Activated CD4-positive, alpha-beta memory T cell treated with anti-CD3 and anti-CD28 coated beads for 36 hours (primary cell): ENCODE measurements at regions of chr22 and their contacts with region 1.

Region 1: DNA sequence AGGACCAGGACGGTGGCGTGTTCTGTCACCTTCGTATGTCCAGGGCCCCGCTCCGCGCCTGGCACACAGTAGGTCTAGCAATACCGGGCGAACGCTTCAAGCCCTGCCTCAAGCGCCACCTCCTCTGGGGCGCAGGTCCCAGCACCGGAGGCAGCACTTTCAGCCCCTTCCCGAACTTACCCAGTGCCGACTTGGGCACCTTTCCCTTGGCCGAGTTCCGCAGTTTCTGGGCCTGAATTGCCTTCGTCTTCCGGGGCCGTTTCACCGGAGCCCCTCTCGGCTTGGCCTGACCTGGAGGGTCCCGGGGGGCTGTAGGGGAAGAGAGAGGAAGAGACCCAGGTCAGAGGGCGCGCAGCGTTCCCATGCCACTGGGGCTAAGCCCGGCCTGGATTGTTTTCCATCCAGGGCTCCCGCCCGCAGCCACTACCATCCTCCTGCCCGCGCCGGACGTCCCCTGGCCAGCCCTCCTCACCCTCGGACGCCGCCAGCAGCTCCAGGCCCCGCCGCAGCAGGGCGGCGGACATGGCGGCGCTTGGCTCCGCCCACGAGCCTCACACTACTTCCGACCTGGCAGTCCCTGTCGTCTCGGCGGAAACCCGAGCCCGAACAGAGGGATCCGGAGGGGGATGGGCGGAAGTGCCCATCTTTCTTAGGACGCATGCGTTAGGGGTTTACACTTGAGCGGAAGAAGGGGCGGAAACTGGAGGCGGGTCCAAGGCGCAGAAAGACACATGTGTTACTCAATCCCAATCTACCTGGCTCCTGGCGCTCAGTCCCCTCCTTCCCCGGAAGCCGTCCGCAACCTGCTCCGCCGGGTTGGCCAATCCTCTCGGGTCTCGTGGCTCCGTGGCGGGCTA is at the start of gene RPS19BP1:
- DNase-seq: peak; percentile 100
- H3K4me3 Mint-ChIP-seq: peak within 1 kb of the TSS; percentile 91
- H3K27ac Mint-ChIP-seq: peak within 1 kb of the TSS; percentile 80
- H3K4me1 Mint-ChIP-seq: peaks cover 58% of the 10 kb centered on the region
- H3K27me3 Mint-ChIP-seq: no peaks in the 10 kb centered on the region
- total RNA-seq, gene RPS19BP1: 65.2 to 67.5 TPM

Region 2: GRCh38 chr22:39170825-39171622 is 361.4 kb before region 1 on chr22:
- CTCF ChIA-PET with region 1: interaction called, 4 read pairs
- POLR2A ChIA-PET with region 1: no interaction called
- intact Hi-C with region 1: loop called (anchors 5 kb)
- DNase-seq: peak; percentile 91
- H3K4me3 Mint-ChIP-seq: peak overlapping the region; percentile 37
- H3K27ac Mint-ChIP-seq: peak overlapping the region; percentile 43
- H3K4me1 Mint-ChIP-seq: peaks cover 40% of the 10 kb centered on the region
- H3K27me3 Mint-ChIP-seq: peaks cover 1% of the 10 kb centered on the region

Region 3: GRCh38 chr22:39439170-39439569 is 93.3 kb before region 1 on chr22:
- CTCF ChIA-PET with region 1: interaction called, 13 read pairs
- POLR2A ChIA-PET with region 1: no interaction called
- intact Hi-C with region 1: no loop called
- DNase-seq: no peak
- H3K4me3 Mint-ChIP-seq: no peak overlapping the region
- H3K27ac Mint-ChIP-seq: no peak overlapping the region
- H3K4me1 Mint-ChIP-seq: no peaks in the 10 kb centered on the region
- H3K27me3 Mint-ChIP-seq: peaks cover 15% of the 10 kb centered on the region

Region 4: DNA sequence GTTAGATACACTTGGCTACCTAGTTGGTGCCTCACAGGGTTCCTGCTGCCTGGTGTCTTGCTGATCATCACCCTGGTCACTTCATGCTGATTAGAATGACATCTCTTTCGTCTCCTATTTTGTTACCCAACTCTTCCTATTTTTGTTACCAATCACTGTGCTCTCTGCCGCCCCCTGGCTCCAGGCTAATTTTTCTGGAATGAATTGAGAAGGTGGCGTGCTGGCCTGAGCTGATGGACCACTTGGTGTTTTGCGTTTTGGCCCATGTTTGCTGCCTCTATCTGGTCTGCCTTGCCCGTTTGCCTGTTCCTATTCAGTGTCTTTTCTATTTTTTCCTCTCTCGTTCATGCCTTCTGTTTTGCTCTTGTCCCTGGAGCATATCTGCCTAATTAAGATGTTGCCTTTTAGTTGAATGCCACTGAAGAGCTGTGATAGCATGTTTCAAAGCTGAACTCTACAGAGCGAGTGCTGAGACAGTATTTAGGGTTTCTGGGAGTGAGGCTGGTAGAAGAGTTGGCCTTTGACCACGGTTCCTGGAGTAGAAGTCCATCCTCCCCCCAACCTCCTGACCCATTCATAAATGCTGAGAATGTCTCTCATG is 18.0 kb before region 1 on chr22:
- CTCF ChIA-PET with region 1: interaction called, 71 read pairs
- POLR2A ChIA-PET with region 1: interaction called, 43 read pairs
- intact Hi-C with region 1: no loop called
- DNase-seq: peak; percentile 67
- H3K4me3 Mint-ChIP-seq: no peak overlapping the region
- H3K27ac Mint-ChIP-seq: peak overlapping the region; percentile 8
- H3K4me1 Mint-ChIP-seq: peaks cover 36% of the 10 kb centered on the region
- H3K27me3 Mint-ChIP-seq: no peaks in the 10 kb centered on the region

Region 5: DNA sequence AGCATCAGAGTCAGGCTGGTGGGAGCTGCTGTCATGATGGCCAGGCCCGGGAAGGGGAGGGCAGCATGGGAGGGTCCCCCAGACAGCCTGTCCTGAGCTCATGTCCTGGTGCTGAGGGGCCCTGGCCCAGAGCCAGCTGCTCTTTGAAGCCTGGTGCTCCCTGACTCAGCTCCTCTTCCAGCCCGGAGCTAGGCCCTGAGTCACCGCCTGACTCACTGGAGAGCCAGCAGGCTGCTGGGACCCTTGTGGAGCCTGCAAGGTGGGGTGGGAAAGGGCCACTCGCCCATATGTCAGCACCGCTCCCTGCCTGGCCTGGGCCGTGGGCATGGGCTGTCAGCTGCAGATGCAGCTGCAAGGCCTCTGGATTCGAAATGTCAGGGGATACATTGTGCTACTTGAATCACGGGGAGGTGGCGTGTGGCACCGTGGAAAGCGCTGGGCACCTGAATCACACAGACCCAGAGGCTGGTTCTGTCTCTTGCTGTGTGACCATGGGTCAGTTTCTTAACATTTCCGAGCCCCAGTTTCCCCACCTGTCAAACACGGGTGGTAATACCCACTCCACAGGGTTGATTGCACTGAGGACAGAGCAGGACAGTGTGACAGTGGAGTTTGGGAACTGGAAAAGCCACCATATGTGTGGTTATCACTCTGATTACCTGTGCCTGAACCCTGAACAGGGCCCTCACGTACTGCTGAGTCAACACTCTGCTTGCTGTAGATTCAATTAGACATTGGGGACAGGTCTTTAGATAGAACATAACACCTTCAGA is 42.5 kb after region 1 on chr22:
- CTCF ChIA-PET with region 1: no interaction called
- POLR2A ChIA-PET with region 1: no interaction called
- intact Hi-C with region 1: no loop called
- DNase-seq: no peak
- H3K4me3 Mint-ChIP-seq: no peak overlapping the region
- H3K27ac Mint-ChIP-seq: no peak overlapping the region
- H3K4me1 Mint-ChIP-seq: no peaks in the 10 kb centered on the region
- H3K27me3 Mint-ChIP-seq: no peaks in the 10 kb centered on the region

Region 6: GRCh38 chr22:39946503-39947219 is 414.2 kb after region 1 on chr22:
- CTCF ChIA-PET with region 1: interaction called, 14 read pairs
- POLR2A ChIA-PET with region 1: no interaction called
- intact Hi-C with region 1: no loop called
- DNase-seq: no peak
- H3K4me3 Mint-ChIP-seq: peak overlapping the region; percentile 51
- H3K27ac Mint-ChIP-seq: peak overlapping the region; percentile 86
- H3K4me1 Mint-ChIP-seq: peaks cover 93% of the 10 kb centered on the region
- H3K27me3 Mint-ChIP-seq: no peaks in the 10 kb centered on the region

Region 7: DNA sequence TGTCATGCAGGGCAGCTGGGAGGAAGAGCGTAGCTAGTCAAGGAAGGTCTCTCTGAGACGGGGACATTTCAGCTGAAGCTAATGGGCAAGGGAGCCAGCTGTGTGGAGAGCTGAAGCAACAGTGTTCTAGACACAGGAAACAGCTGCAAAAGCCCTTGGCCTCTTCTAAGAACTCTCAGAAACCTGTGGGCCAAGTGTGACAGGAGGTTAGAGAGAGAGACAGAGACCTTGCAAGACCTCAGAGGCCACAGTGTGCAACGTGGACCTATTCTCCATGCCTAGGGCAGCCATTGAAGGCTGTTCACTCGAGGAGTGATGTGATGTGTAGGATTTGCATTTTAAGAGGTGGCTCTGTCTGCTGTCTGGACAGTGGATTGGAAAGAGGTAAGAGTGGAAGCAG is 596.5 kb after region 1 on chr22:
- CTCF ChIA-PET with region 1: no interaction called
- POLR2A ChIA-PET with region 1: no interaction called
- intact Hi-C with region 1: no loop called
- DNase-seq: peak; percentile 44
- H3K4me3 Mint-ChIP-seq: no peak overlapping the region
- H3K27ac Mint-ChIP-seq: peak overlapping the region; percentile 66
- H3K4me1 Mint-ChIP-seq: peaks cover 17% of the 10 kb centered on the region
- H3K27me3 Mint-ChIP-seq: no peaks in the 10 kb centered on the region

Region 8: GRCh38 chr22:40177738-40178416 is 645.4 kb after region 1 on chr22 and contains the start of gene TNRC6B:
- CTCF ChIA-PET with region 1: no interaction called
- POLR2A ChIA-PET with region 1: no interaction called
- intact Hi-C with region 1: loop called (anchors 5 kb)
- DNase-seq: peak; percentile 84
- H3K4me3 Mint-ChIP-seq: peak within 1 kb of the TSS; percentile 89
- H3K27ac Mint-ChIP-seq: peak within 1 kb of the TSS; percentile 92
- H3K4me1 Mint-ChIP-seq: peaks cover 54% of the 10 kb centered on the region
- H3K27me3 Mint-ChIP-seq: no peaks in the 10 kb centered on the region
- total RNA-seq, gene TNRC6B: 34.9 to 38.8 TPM